ENCODE measurements at regions of chr5 and their contacts with region 1.

Region 1: GRCh38 chr5:69234457-69235268 is at the start of gene CDK7:
- DNase-seq: peak; percentile 94
- H3K4me3 Mint-ChIP-seq: peak within 1 kb of the TSS; percentile 93
- H3K27ac Mint-ChIP-seq: peak within 1 kb of the TSS; percentile 93
- H3K4me1 Mint-ChIP-seq: peaks cover 33% of the 10 kb centered on the region
- H3K27me3 Mint-ChIP-seq: no peaks in the 10 kb centered on the region
- CTCF ChIP-seq: no peak
- total RNA-seq, gene CDK7: 43.7 and 48.5 TPM in 2 replicates

Region 2: DNA sequence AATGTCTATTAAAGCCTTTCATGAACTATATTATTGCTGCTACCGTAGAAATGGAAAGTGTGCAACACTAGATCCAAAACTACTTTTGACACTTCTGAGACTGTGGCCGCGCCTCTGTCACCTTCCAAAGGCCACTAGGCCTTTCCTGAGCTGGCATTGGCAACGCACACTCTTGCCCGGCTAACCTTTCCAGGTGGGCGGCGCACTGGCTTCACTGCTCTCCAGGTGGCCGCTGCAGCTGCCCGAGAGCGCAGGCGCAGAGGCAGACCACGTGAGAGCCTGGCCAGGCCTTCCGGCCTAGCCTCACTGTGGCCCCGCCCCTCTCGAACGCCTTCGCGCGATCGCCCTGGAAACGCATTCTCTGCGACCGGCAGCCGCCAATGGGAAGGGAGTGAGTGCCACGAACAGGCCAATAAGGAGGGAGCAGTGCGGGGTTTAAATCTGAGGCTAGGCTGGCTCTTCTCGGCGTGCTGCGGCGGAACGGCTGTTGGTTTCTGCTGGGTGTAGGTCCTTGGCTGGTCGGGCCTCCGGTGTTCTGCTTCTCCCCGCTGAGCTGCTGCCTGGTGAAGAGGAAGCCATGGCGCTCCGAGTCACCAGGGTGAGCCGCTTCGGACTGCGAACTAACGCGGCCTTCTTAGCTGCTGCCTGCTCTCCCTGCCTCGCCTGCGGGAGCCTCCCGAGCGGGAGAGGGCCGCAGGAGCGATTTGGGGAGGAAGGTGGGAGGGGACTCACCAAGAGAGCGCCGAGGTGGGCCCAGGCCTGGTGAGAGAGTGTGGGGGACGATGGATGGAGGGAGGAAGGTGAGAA is 67.8 kb before region 1 on chr5 and contains the start of gene CCNB1:
- CTCF ChIA-PET with region 1: no interaction called
- POLR2A ChIA-PET with region 1: interaction called, 6 read pairs
- intact Hi-C with region 1: loop called (anchors 10 kb)
- DNase-seq: peak; percentile 99
- H3K4me3 Mint-ChIP-seq: peak within 1 kb of the TSS; percentile 94
- H3K27ac Mint-ChIP-seq: peak within 1 kb of the TSS; percentile 85
- H3K4me1 Mint-ChIP-seq: peaks cover 27% of the 10 kb centered on the region
- H3K27me3 Mint-ChIP-seq: no peaks in the 10 kb centered on the region
- CTCF ChIP-seq: no peak
- total RNA-seq, gene CCNB1: 84.3 and 120 TPM in 2 replicates

Region 3: DNA sequence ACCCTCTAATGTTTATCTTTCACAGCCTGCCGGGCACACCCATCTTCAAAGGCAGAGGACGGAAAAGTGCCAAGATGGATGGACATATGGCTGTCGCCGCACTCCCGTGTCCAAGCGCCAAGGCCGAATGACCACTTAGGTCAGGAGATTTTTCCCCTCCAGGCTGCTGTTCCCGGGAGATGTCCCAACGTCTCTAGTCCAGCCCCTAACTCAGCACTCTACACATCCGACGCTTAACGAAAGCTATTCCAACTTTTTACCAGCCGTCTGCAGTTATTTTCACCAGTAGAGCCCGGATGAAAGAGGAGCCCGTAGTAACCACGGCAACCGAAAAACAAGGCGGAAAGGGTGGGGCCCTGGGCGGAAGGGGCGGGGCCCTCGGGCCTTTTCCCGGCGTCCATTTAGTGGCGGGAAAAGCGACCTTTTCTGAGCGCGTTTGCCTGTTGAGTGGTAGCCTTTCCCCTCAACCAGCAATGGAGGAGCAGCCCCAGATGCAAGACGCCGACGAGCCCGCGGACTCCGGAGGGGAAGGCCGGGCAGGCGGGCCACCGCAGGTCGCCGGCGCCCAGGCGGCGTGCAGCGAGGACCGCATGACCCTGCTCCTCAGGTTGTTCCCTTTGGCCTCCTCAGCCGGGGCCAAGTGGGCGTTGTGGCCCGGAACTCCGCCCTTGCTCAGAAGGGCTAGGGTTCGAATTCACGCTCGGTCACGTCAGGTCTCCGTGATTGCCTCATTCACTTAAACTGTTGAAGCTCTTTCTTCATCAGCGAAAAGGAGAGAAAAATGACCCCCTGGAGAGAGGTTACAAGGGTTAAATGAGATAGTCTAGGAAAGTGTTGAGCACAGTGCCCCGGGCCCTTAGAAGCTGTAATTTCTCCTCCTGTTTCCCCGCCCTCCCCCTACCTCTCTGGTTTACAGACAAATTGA is 45.2 kb before region 1 on chr5 and contains the start of gene CENPH:
- CTCF ChIA-PET with region 1: interaction called, 5 read pairs
- POLR2A ChIA-PET with region 1: interaction called, 19 read pairs
- intact Hi-C with region 1: no loop called
- DNase-seq: peak; percentile 92
- H3K4me3 Mint-ChIP-seq: peak within 1 kb of the TSS; percentile 96
- H3K27ac Mint-ChIP-seq: peak within 1 kb of the TSS; percentile 99
- H3K4me1 Mint-ChIP-seq: no peaks in the 10 kb centered on the region
- H3K27me3 Mint-ChIP-seq: no peaks in the 10 kb centered on the region
- CTCF ChIP-seq: no peak
- total RNA-seq, gene CENPH: 14.1 and 21.9 TPM in 2 replicates

Region 4: GRCh38 chr5:69217548-69218526 is 16.8 kb before region 1 on chr5:
- CTCF ChIA-PET with region 1: no interaction called
- POLR2A ChIA-PET with region 1: interaction called, 63 read pairs
- intact Hi-C with region 1: no loop called
- DNase-seq: peak; percentile 91
- H3K4me3 Mint-ChIP-seq: peak overlapping the region; percentile 100
- H3K27ac Mint-ChIP-seq: peak overlapping the region; percentile 99
- H3K4me1 Mint-ChIP-seq: peaks cover 11% of the 10 kb centered on the region
- H3K27me3 Mint-ChIP-seq: no peaks in the 10 kb centered on the region
- CTCF ChIP-seq: no peak

Region 5: GRCh38 chr5:69369369-69370121 is 134.9 kb after region 1 on chr5 and contains the starts of genes AK6, RAD17 and TAF9:
- CTCF ChIA-PET with region 1: no interaction called
- POLR2A ChIA-PET with region 1: interaction called, 12 read pairs
- intact Hi-C with region 1: no loop called
- DNase-seq: peak; percentile 93
- H3K4me3 Mint-ChIP-seq: peak within 1 kb of the TSS; percentile 79
- H3K27ac Mint-ChIP-seq: peak within 1 kb of the TSS; percentile 99
- H3K4me1 Mint-ChIP-seq: peaks cover 28% of the 10 kb centered on the region
- H3K27me3 Mint-ChIP-seq: no peaks in the 10 kb centered on the region
- CTCF ChIP-seq: no peak
- total RNA-seq, gene AK6: 52.4 and 64.3 TPM in 2 replicates
- total RNA-seq, gene RAD17: 21.9 and 25.9 TPM in 2 replicates
- total RNA-seq, gene TAF9: 116 and 149 TPM in 2 replicates